RWPE1 (cell line): ENCODE measurements at regions of chr15 and their contacts with region 1.

Region 1: GRCh38 chr15:40763801-40764732 is at the start of gene GCHFR:
- DNase-seq: peak; percentile 68
- H3K27ac ChIP-seq: peak within 1 kb of the TSS; percentile 99
- CTCF ChIP-seq: peak; percentile 71

Region 2: DNA sequence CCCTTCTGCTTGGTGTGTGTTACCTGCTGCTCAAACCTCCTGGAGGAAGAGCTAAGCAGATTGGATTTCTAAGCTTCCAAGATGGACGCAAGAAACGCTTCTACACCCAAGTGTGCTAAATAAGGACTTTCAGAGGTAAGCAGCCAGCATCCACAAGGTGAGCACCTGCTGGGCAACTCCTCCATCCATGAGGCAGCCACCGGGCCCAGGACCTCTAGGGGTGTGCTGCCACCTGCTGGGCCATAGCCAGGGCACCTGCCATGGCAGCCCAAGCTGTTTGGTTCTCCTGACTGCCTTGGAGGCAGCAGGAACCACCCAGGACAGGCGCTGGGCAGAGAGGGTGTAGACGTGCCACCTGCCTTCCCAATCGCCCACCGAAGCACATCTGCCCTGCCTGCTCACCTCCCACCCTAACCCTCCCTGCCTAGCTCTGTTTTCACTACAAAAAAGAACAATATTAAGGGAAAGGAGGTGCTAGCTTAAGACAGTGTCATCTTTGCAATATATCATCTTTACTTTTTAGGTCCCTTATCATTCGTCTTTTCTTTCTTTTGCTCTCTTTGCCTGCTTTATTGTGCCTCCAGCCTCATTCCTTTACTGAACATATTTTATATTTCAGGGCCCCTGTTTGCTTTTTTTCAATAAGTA is 18.6 kb after region 1 on chr15:
- CTCF ChIA-PET with region 1: interaction called, 12 read pairs
- POLR2A ChIA-PET with region 1: interaction called, 6 read pairs
- DNase-seq: peak; percentile 74
- H3K27ac ChIP-seq: no peak overlapping the region
- CTCF ChIP-seq: peak; percentile 87